Transverse colon (tissue), 4 donors: ENCODE measurements at regions of chr18 and their contacts with region 1.

Region 1: DNA sequence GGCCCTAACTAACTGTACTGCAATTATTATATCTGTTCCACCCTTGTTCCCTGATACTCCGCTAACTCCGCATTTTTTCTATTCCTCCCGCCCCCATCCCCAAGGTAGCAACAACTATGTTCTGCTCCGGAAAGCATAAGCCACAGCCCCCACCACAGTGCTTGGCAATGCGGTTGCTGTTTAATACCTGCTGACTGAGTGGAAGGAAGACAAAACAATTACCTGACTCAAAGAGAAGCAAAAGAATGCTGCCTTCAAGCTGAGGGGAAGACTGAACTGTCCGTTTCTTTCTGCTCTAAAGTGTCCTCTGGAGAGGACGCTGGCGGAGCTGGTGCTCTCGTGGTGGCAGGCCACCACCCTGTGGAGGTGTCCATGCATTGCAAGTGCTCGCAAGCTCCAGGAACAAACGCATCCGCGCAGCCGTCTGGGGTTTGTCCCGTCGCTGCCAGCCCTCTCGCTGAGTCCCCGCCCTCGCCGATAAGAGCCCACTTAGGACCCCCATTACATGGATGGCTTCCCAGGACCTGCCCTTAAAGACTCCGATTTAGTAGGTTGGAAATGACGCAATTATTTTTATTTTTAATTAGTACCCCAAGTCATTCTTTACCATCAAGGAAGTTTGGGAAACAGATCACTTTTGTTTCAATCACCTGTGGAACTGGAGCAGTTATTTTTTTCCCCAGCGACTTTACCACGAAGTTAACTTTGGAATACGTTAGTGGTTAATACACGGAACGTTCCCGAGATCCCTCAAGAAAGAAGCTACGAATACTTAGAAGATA is 1.6 kb upstream of the MYL12A start:
- DNase-seq: peak; percentile 91
- H3K4me3 ChIP-seq: peak overlapping the region in 3 of 4 donors; percentile 81 to 100 (median 97)
- H3K27ac ChIP-seq: peak overlapping the region; percentile 98 to 100 (median 99)
- H3K4me1 ChIP-seq: peaks cover 9 to 43% (median 23%) of the 10 kb centered on the region in 4 donors
- H3K27me3 ChIP-seq: no peaks in the 10 kb centered on the region
- CTCF ChIP-seq: peak; percentile 92 to 97 (median 95)
- EP300 ChIP-seq: no peak
- POLR2A ChIP-seq: no peak

Region 2: GRCh38 chr18:2758309-2758708 is 487.7 kb before region 1 on chr18:
- in situ Hi-C with region 1: loop called in 1 of 4 experiments (anchors 25 kb)
- intact Hi-C with region 1: no loop called
- DNase-seq: no peak
- H3K4me3 ChIP-seq: no peak overlapping the region
- H3K27ac ChIP-seq: peak overlapping the region in 3 of 4 donors; percentile 4 to 36 (median 27)
- H3K4me1 ChIP-seq: peaks cover 0 to 21% (median 10%) of the 10 kb centered on the region in 4 donors
- H3K27me3 ChIP-seq: no peaks in the 10 kb centered on the region
- CTCF ChIP-seq: no peak
- EP300 ChIP-seq: no peak
- POLR2A ChIP-seq: no peak

Region 3: GRCh38 chr18:3129053-3129864 is 116.8 kb before region 1 on chr18:
- in situ Hi-C with region 1: loop called in 1 of 4 experiments (anchors 25 kb)
- intact Hi-C with region 1: no loop called
- DNase-seq: peak; percentile 88
- H3K4me3 ChIP-seq: peak overlapping the region in 1 of 4 donors; percentile 16
- H3K27ac ChIP-seq: no peak overlapping the region
- H3K4me1 ChIP-seq: peaks cover 0 to 8% (median 3%) of the 10 kb centered on the region in 4 donors
- H3K27me3 ChIP-seq: no peaks in the 10 kb centered on the region
- CTCF ChIP-seq: peak; percentile 76 to 85 (median 83)
- EP300 ChIP-seq: no peak
- POLR2A ChIP-seq: no peak

Region 4: DNA sequence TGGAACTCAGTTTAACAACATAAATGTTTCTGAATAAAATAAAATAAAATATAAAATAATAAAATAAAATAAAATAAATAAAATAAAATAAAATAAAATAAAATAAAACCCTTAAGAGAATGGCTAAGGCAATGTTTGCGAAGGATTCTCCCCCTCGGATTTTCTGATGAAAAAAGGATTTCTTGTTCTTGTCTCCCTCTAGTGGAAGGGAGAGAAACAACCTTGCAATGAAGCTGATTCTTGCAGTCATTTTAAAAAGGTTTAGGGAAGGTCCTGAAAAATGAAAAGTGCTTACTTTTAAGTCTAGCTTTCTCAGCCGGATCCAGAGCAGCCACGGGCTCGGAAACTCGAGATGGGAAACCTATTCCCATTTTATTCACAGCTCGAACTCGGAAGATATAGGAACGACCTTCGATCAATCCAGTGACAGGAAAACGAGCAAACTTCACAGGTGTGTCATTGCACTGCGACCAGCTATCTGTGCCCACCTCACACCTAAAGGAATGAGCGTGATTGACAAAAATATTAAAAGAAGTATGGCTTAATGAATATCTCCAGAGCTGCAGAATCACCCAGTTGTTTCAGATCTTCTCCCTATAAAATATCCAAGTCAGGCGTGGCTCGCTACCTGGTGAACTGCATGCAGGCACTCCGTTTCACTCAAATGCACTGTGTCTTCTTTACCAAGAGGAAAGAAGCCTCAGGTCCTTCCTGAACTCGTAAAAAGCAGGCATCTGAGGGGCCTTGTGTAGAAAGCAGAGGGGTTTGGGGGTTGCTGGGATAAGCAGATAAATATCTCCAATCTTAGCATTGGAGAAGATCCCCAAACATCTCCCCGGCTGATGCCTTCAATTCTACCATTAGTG is 94.4 kb before region 1 on chr18:
- in situ Hi-C with region 1: loop called in 2 of 4 experiments (anchors 10 to 25 kb)
- intact Hi-C with region 1: loop called (anchors 10 kb)
- DNase-seq: no peak
- H3K4me3 ChIP-seq: peak overlapping the region in 2 of 4 donors; percentile 10 to 38
- H3K27ac ChIP-seq: no peak overlapping the region
- H3K4me1 ChIP-seq: no peaks in the 10 kb centered on the region
- H3K27me3 ChIP-seq: no peaks in the 10 kb centered on the region
- CTCF ChIP-seq: peak; percentile 78 to 84 (median 80)
- EP300 ChIP-seq: no peak
- POLR2A ChIP-seq: no peak